BJ (cell line): ENCODE measurements at regions of chr5 and their contacts with region 1.

Region 1: DNA sequence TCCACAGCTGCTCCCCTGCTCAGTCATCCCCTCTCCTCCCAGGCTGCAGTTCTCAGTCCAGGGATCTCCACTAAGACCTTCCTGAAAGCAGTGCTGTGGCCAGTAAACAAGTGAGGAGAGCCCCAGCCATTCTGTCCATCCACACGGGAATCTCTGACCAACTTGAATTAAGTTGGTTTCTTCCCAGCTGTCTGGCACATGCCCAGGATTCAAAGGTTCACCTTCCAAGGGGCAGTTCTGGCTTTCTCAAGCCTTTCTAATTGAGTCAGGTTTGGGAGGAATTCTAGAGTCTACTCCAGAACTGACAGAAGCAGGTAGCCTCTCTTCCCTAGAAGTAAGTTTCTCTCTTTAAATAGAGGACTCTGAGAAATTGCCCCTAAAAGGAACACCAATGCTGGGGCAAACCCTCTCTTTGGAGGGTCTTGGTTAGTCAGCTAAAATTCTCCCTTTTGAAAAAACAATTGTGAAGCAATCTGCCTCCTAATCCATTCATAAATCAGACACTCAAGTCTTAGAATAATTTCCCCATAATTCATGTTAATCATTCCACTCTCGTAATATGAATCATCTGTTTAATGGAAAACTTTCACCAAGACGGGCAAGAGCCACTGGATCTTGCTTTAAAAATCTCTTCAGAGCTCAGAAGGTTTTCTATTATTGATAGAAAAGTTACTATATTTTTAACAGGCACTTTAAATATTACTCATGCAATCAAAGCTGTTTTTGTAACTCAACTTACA is 133.8 kb downstream of the SPOCK1 start:
- DNase-seq: no peak
- H3K4me3 ChIP-seq: no peak overlapping the region
- H3K27me3 ChIP-seq: no peaks in the 10 kb centered on the region
- CTCF ChIP-seq: no peak

Region 2: GRCh38 chr5:137344723-137345322 is 20.5 kb before region 1 on chr5:
- CTCF ChIA-PET with region 1: interaction called, 29 read pairs
- POLR2A ChIA-PET with region 1: no interaction called
- DNase-seq: no peak
- H3K4me3 ChIP-seq: no peak overlapping the region
- H3K27me3 ChIP-seq: no peaks in the 10 kb centered on the region
- CTCF ChIP-seq: peak; percentile 88